ENCODE measurements at regions of chr17 and their contacts with region 1.

Region 1: GRCh38 chr17:27879987-27880608 is 13.1 kb downstream of the LYRM9 start:
- DNase-seq: peak; percentile 81
- ATAC-seq: peak; percentile 95

Region 2: DNA sequence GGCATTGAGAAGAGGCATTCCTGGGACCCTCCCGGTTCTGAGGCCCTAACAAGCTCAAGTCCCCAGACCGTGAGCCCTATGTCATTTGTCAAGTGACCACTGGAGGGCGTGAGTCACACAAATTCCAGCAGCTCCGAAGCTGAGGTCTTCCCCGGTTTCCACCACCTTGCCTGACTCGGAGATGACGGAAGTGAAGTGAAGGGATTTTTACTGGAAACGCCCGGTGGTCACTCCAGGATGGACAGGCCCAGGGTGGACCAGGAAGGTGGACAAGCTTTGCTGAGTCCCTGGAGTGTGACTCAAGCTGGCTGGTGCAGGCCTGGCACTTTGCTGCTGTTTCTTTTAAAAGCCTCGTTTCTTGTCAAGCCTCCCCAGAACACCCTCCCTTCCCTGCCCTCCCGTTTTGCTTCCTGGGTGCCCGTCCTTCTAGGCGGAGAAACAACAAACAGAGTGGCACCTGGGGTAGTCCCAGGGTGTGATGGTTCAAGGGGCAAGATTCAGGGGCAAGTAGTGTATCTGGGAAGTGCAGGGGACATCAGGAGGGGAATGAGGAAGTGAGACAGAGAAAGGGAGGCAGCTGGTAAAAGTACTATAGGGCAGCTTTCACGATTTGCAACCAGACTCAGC is 74.5 kb before region 1 on chr17:
- intact Hi-C with region 1: loop called (anchors 2 kb)
- DNase-seq: peak; percentile 85
- ATAC-seq: peak; percentile 89

Region 3: DNA sequence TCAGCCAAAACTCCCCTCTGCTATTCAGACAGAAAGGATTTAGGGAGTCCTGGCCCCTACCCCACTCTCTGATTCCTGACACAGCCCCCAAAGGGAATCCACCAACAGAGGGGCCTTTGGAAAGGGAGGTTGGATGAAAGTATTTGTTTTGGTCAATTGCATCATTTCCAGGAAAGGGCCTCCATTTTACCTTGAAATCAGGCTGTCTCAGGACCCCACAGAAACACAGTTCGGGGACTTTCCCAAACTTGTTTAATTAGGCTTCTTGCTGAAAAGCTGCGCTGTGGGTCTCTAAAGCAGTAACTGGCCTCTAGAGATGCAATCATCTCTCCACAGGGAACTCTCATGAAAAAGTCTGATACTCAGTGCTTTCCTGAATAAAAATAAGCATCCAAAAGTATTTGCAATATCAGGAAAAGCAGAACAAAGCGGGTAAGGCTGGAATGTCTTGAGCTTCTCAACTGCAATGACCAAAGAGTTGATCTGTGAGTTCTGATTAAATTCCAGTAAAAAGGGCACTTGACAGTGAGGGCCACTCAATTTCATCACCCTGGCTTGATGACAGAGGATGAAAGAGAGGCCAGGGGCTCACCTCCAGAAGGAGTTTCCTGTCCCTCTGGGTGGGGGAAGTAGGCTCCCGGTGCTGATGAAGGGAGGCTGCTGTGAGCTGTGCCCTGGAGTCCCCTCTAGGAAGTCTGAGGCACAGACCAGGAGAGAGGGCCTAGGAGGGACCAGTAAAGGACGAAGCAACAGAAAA is 23.2 kb before region 1 on chr17:
- intact Hi-C with region 1: no loop called
- DNase-seq: no peak
- ATAC-seq: no peak

Region 4: GRCh38 chr17:27980043-27980442 is 99.9 kb after region 1 on chr17:
- intact Hi-C with region 1: no loop called
- DNase-seq: no peak
- ATAC-seq: no peak

Region 5: DNA sequence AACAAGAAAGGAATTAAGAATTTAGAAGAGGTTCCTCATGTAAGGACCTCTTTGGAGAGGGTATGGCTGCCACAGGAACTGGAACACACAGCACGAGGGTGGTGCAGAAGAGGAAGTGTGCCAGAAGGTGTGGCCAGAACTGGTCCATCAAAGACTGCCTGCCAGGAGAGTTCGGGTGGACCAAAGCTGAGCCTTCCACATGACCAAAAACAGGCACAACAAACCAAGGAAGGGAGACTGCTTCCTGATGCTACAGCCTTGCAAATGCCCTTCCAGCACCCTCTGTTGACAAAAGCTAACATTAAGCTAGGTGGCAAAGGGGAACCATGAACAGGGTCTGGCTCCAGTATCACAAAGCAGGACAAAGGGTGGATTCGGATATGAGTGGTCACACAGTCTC is 313.1 kb after region 1 on chr17:
- intact Hi-C with region 1: no loop called
- DNase-seq: no peak
- ATAC-seq: peak; percentile 85